Tibial artery (tissue), 4 donors: ENCODE measurements at regions of chr14 and their contacts with region 1.

Region 1: DNA sequence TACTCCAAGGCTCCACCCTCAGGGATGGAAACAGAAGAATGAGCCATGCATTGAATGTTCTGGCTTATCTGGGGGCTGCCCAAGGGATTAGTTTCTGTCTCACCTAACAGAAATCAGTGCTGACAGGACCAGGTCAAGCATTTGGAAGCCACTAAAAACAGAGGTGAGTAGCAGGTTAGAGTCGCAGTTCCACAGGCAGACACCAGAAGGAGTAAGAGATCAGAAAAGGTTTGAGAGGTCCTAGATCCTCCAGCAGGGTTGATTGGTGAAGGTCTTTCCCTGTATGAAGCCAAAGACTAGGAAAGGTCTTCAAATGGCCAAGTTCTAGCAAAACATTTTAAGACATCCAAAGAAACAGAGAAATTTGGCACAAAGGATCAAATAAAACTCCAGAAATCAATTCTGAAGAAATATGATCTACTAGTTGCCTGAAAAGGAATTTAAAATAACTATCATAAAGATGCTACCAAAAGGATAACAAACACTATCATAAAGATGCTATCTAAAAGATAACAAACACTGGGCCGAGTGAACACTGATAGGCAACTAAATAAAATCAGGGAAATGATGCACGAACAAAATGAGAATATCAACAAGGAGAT is 19.5 kb upstream of the TTC9 start:
- DNase-seq: no peak
- H3K4me3 ChIP-seq: no peak overlapping the region
- H3K27ac ChIP-seq: no peak overlapping the region
- H3K4me1 ChIP-seq: no peaks in the 10 kb centered on the region
- H3K27me3 ChIP-seq: no peaks in the 10 kb centered on the region
- CTCF ChIP-seq: peak; percentile 27 to 29

Region 2: GRCh38 chr14:70436867-70437266 is 185.3 kb before region 1 on chr14:
- intact Hi-C with region 1: no loop called
- DNase-seq: no peak
- H3K4me3 ChIP-seq: no peak overlapping the region
- H3K27ac ChIP-seq: no peak overlapping the region
- H3K4me1 ChIP-seq: no peaks in the 10 kb centered on the region
- H3K27me3 ChIP-seq: no peaks in the 10 kb centered on the region
- CTCF ChIP-seq: no peak

Region 3: GRCh38 chr14:70721542-70721941 is 99.3 kb after region 1 on chr14:
- intact Hi-C with region 1: loop called (anchors 10 kb)
- DNase-seq: peak in 1 of 2 donors; percentile 3
- H3K4me3 ChIP-seq: no peak overlapping the region
- H3K27ac ChIP-seq: no peak overlapping the region
- H3K4me1 ChIP-seq: no peaks in the 10 kb centered on the region
- H3K27me3 ChIP-seq: peaks cover 0 to 20% of the 10 kb centered on the region in 2 donors
- CTCF ChIP-seq: no peak